ENCODE measurements at regions of chr19 and their contacts with region 1.

Region 1: GRCh38 chr19:45439569-45440254 is 16.0 kb upstream of the ERCC1 start:
- DNase-seq: no peak
- H3K4me3 ChIP-seq: peak overlapping the region; percentile 62
- H3K27ac ChIP-seq: no peak overlapping the region
- H3K27me3 ChIP-seq: no peaks in the 10 kb centered on the region
- CTCF ChIP-seq: peak; percentile 96

Region 2: DNA sequence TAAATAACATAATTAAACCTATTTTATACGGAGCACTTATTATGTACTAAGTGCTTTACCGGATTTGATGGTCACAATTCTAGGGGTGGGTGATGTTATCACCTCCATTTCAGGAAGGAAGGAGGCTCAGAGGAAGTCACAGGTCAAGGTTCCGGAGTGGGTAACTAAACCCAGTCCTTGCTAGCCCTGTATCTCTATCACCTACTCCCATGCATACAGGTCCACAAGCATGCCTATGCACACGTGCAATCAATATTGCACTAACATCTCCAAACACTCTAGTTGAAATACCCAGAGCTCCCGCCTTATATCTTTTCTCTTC is 10.3 kb after region 1 on chr19:
- CTCF ChIA-PET with region 1: interaction called, 16 read pairs
- POLR2A ChIA-PET with region 1: interaction called, 3 read pairs
- DNase-seq: no peak
- H3K4me3 ChIP-seq: peak overlapping the region; percentile 60
- H3K27ac ChIP-seq: peak overlapping the region; percentile 52
- H3K27me3 ChIP-seq: no peaks in the 10 kb centered on the region
- CTCF ChIP-seq: no peak

Region 3: DNA sequence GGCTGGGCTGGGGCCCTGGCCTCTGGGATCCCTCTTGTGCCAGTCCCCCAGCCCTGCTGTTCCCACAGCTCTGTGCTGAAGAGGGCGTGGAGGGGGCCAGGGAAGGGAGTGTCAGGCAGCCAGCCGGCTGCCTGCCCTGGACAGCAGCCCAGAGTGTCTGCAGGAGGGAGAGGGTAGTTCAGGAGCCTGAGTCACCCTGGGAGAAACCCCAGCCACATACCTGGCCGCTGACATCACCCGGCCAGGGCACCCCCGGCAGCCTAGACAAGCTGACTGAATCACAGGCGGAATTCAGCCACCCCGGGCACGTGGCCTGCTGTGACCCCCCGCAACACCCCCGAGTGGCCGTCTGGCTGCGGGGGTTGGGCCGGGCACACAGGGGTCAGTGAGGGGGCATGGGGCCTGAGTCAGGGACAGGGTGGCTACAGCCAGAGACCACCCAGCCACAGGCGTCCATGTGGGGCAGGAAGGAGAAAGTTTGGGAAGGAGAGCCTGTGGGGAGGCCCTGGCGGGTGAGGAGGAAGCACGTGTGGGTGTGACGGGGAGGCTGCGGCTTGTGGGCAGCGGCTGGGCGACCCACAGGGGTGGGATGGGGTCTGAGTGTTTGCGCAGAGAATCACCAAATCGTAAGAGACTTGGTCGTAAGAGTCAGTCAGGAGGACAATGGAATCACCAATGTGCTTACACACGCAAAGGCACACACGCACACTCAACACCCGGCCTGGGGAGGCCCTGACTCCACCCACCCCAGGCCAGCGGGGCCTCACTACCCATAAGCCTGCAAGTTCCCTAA is 16.2 kb after region 1 on chr19:
- CTCF ChIA-PET with region 1: interaction called, 16 read pairs
- POLR2A ChIA-PET with region 1: interaction called, 4 read pairs
- DNase-seq: peak; percentile 97
- H3K4me3 ChIP-seq: peak overlapping the region; percentile 42
- H3K27ac ChIP-seq: peak overlapping the region; percentile 99
- H3K27me3 ChIP-seq: no peaks in the 10 kb centered on the region
- CTCF ChIP-seq: no peak

Region 4: GRCh38 chr19:45469132-45469944 is 29.6 kb after region 1 on chr19:
- CTCF ChIA-PET with region 1: interaction called, 224 read pairs
- POLR2A ChIA-PET with region 1: interaction called, 9 read pairs
- DNase-seq: peak; percentile 84
- H3K4me3 ChIP-seq: peak overlapping the region; percentile 96
- H3K27ac ChIP-seq: peak overlapping the region; percentile 94
- H3K27me3 ChIP-seq: no peaks in the 10 kb centered on the region
- CTCF ChIP-seq: no peak

Region 5: DNA sequence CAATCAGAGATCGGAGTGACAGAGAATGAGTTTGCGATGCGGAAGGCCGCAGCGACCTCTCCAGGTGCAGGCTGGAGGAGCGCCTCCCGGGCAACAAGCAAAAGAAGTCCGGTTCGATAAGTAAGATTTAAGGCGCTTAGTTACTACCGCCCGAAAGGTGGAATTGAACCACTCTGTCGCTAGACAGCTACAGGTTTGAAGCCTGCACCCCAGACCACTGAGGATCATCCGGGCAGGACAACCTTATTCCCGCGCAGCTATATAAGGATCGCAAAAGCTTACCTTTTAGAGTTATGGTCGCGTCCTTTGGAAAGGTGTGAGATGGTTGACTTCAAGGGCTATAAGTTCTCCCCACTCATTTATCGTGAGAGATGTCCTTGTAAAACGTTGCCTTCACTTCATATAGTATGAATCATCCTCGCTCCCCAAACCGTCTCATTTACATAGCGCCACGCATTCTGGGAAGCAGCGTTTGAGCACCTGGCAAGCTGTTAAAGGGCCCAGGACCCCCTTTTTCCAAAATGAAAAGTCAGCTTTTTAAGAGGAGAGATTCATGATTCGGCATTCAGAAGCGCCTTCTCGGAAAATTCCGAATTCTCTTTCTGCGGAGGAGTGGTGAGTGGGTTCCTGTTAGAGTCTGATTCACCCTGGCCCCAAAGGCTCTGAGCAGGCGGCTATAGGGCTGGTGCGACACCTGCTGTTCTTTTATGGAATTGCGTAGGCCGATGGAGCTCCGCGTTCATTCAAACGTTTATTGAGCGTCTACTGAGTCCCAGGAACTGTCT is 38.9 kb after region 1 on chr19:
- CTCF ChIA-PET with region 1: interaction called, 224 read pairs
- POLR2A ChIA-PET with region 1: interaction called, 30 read pairs
- DNase-seq: peak; percentile 86
- H3K4me3 ChIP-seq: peak overlapping the region; percentile 65
- H3K27ac ChIP-seq: peak overlapping the region; percentile 96
- H3K27me3 ChIP-seq: no peaks in the 10 kb centered on the region
- CTCF ChIP-seq: peak; percentile 95